ENCODE measurements at regions of chr10 and their contacts with region 1.

Region 1: GRCh38 chr10:80382989-80383388 is 25.4 kb upstream of the PRXL2A start:
- DNase-seq: peak; percentile 22
- H3K4me3 Mint-ChIP-seq: no peak overlapping the region
- H3K27ac Mint-ChIP-seq: no peak overlapping the region
- H3K4me1 Mint-ChIP-seq: peaks cover 16% of the 10 kb centered on the region
- H3K27me3 Mint-ChIP-seq: peaks cover 13% of the 10 kb centered on the region

Region 2: DNA sequence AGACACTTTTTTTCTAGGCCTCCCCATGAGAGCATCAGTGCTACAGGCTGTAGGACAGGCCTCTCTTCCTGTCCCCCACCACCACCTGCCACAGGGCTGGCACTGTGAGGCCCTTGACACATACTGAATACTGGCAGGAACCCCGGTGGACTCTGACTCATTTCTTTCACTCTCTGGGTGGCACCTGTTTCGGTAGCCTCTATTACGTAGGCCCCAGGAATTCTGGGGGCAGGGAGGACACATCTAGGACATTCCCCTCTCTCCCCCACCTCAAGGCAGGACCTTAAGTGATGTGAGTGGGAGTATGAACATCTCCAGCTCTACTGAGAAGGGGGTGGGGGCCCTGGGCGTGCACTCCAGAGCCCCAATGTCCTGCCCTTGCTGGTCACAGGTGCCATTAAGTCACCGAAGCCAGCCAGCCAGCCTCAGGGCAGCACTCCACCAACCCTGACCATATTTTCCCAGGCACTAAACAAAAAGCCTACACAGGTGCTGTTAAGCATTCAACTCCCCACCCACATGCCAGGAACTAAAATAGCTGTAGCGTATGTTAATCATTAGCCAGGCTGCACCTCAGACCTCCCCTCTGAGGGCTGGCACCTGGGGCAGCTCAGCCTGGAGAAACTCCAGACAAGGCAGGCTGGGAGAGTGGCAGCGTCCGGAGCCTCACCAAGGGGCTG is 186.6 kb before region 1 on chr10:
- intact Hi-C with region 1: no loop called
- DNase-seq: peak; percentile 32
- H3K4me3 Mint-ChIP-seq: peak overlapping the region; percentile 11
- H3K27ac Mint-ChIP-seq: peak overlapping the region; percentile 82
- H3K4me1 Mint-ChIP-seq: peaks cover 70% of the 10 kb centered on the region
- H3K27me3 Mint-ChIP-seq: no peaks in the 10 kb centered on the region

Region 3: GRCh38 chr10:80289451-80290287 is 93.3 kb before region 1 on chr10 and contains the start of gene MAT1A:
- intact Hi-C with region 1: no loop called
- DNase-seq: no peak
- H3K4me3 Mint-ChIP-seq: no peak within 1 kb of the TSS
- H3K27ac Mint-ChIP-seq: no peak within 1 kb of the TSS
- H3K4me1 Mint-ChIP-seq: no peaks in the 10 kb centered on the region
- H3K27me3 Mint-ChIP-seq: peaks cover 24% of the 10 kb centered on the region
- total RNA-seq, gene MAT1A: not detected in 2 replicates

Region 4: DNA sequence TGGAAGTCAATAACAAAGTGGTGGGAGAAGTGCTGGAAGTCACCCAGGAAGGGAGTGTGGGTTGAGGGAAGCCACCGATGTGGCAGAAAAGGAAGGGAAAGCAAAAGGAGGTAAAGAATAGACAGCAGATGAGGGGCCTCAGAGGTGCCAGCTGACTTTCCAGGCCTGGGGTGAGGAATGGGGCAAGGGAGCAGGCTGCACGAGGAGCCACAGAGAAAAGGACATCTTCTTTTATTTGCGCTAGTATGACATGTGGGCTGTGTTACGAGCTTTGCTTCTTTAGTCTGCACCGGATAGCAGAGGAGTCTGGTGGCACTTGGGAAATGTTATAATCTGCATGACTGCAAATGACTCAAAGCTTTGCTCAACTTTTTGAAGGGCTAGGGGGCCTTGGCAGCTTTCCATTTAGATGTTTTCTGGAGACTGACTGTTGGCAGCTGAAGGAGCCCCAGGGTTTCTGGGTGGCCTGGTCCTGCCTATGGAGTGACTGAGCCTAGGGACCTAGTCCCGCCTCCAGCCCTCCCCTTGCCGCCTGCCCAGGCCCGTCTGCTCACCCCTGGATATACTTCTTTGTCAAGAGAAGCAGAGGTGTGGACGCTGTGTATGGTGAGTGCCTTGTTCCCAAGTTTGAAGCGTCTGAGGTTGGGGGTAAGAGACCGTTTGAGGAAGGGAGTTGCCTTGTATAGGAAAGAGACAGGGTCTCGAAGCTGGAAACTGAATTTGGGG is 30.4 kb after region 1 on chr10:
- intact Hi-C with region 1: loop called (anchors 5 kb)
- DNase-seq: no peak
- H3K4me3 Mint-ChIP-seq: no peak overlapping the region
- H3K27ac Mint-ChIP-seq: no peak overlapping the region
- H3K4me1 Mint-ChIP-seq: peaks cover 29% of the 10 kb centered on the region
- H3K27me3 Mint-ChIP-seq: peaks cover 1% of the 10 kb centered on the region

Region 5: DNA sequence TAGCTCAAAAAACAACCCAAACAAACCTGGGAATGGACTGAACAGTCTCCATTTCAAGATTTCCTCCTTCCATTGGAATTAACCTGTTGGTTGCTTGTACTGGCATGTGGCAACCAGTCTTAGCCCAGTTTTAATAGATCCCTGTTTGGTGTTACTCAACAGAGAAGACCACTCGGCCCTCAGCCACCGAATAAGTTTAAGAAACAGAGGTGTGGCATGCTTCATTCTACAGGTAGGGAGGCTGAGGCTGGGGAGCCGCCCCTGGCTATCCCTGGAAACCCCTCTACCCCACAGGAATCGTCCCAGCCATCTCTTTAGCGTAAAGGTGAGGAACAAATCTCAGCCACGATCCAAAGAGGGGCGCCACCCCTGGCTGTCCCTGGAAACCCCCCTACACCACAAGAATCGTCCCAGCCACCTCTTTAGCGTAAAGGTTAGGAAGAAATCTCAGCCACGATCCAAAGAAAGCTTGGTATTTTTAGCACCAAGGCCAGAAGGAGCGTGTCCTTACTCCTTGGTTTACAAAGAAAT is 70.2 kb after region 1 on chr10:
- intact Hi-C with region 1: no loop called
- DNase-seq: no peak
- H3K4me3 Mint-ChIP-seq: peak overlapping the region; percentile 73
- H3K27ac Mint-ChIP-seq: peak overlapping the region; percentile 53
- H3K4me1 Mint-ChIP-seq: peaks cover 28% of the 10 kb centered on the region
- H3K27me3 Mint-ChIP-seq: peaks cover 2% of the 10 kb centered on the region

Region 6: DNA sequence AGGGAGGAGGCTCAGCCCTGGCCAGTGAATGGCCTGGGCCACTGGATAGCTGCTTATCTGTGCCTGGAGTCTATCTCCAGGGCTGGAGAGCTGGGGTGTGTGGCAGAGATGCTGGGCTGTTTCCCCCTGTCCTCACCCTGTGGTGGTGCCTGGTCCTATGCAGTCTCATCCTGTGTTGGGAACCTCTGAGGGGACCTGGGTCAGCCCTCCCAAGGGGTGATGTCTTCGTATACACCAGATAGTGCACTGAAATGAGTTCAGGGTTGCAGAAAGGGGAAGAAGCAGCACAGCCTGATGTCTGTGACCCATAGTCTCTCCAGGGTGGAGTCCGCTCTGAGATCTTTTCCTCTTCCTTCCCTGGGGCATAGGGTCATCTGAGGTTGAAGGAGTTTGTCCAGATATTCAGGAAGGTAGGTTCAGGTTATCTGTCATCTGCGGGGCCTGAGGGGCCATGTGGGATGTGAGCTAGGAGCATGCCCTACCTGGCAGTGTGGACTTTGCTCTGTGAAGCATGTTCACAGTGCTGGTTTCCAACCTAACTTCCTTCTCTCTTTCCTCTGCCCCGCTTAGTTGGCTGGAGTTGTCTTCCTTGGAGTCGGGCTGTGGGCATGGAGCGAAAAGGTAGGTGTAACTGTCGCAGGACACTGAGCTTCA is 121.3 kb after region 1 on chr10:
- intact Hi-C with region 1: loop called (anchors 1 kb)
- DNase-seq: no peak
- H3K4me3 Mint-ChIP-seq: no peak overlapping the region
- H3K27ac Mint-ChIP-seq: peak overlapping the region; percentile 1
- H3K4me1 Mint-ChIP-seq: peaks cover 56% of the 10 kb centered on the region
- H3K27me3 Mint-ChIP-seq: no peaks in the 10 kb centered on the region

Region 7: DNA sequence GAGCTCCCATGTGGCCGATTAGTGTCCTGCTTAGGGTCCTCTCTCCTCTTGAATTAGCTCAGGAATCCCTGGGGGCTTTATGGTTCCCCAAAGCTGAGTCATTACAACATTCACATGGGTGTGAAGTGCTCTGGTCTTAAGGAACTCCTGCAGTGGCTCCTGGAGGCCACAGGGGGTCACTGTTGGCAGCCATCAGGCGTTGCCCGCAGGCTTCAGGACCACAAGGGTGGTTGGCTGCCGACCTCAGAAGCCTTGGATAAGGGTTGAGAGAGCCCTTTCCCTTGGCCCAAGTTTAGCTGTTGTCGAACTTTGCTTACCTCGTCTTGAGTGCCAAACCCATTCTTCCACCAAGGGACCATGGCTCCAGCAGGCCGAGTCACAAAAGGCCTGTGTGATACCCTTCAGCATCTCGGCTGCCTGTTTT is 216.4 kb after region 1 on chr10:
- intact Hi-C with region 1: loop called (anchors 10 kb)
- DNase-seq: peak; percentile 28
- H3K4me3 Mint-ChIP-seq: no peak overlapping the region
- H3K27ac Mint-ChIP-seq: no peak overlapping the region
- H3K4me1 Mint-ChIP-seq: no peaks in the 10 kb centered on the region
- H3K27me3 Mint-ChIP-seq: peaks cover 2% of the 10 kb centered on the region

Region 8: DNA sequence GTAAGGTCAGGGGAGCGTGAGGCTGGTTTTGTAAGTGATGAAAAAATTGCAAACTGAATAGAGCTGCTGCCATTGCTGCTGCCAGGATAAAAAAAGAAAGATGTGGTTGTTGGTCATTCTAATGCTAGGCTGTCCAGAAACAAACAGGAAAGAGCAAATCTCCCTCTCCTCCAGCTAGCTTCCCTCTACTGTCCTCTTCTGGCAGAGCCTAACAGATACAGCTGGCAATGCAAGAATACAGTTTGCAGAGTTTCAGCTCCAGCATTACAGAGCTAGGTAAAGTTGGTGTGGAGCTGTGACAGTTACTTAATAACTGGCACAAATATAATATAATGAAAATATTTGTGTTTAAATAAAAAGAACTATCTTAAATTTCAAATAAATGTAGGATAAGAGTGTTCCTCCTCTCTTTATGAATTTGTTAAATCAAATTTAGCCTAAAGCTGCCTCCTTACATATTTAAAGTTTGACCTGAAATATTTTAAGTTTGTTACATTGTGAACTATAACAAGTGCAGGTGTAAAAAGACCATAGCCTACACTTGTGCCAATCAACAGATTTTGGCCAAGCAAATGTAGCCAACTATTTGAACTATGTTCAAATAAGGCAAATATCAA is 562.4 kb after region 1 on chr10:
- intact Hi-C with region 1: loop called (anchors 5 kb)
- DNase-seq: no peak
- H3K4me3 Mint-ChIP-seq: no peak overlapping the region
- H3K27ac Mint-ChIP-seq: no peak overlapping the region
- H3K4me1 Mint-ChIP-seq: no peaks in the 10 kb centered on the region
- H3K27me3 Mint-ChIP-seq: no peaks in the 10 kb centered on the region

Measured in activated T-helper 2 cell treated with anti-CD3 and anti-CD28 coated beads, Interferon-gamma antibody, Interleukin-2, Interleukin-4, amounts not matched to agents 10 μg/mL and 5 μg/mL and 100 μg/mL, durations not matched to agents 14 hours and 24 hours and 36 hours (primary cell).